ENCODE measurements at regions of chr11 and their contacts with region 1.

Region 1: DNA sequence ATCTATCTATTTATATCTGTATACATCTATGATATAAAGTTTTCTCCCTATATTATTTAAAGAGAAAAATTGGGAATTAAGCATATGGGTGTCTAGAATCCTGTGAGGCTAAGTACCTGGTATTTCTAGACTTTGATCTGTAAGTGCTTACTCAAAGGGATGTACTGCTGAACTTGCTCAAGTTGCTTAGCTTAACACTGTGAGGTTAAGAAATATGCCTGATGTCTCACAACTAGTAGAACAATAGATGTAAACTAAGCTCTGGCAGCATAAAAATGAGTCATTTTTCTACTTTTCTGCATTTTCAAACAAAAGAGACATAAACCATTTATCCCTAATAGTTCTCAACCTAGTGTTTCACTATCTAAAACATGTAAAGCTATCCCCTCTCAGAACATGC is 744.4 kb upstream of the ANO3 start:
- DNase-seq: peak; percentile 0
- H3K4me3 Mint-ChIP-seq: no peak overlapping the region
- H3K27ac Mint-ChIP-seq: no peak overlapping the region
- H3K4me1 Mint-ChIP-seq: no peaks in the 10 kb centered on the region
- H3K27me3 Mint-ChIP-seq: no peaks in the 10 kb centered on the region
- CTCF ChIP-seq: no peak

Region 2: GRCh38 chr11:25119416-25119815 is 468.1 kb before region 1 on chr11:
- CTCF ChIA-PET with region 1: no interaction called
- POLR2A ChIA-PET with region 1: no interaction called
- intact Hi-C with region 1: loop called (anchors 10 kb)
- DNase-seq: no peak
- H3K4me3 Mint-ChIP-seq: no peak overlapping the region
- H3K27ac Mint-ChIP-seq: no peak overlapping the region
- H3K4me1 Mint-ChIP-seq: no peaks in the 10 kb centered on the region
- H3K27me3 Mint-ChIP-seq: no peaks in the 10 kb centered on the region
- CTCF ChIP-seq: no peak

Measured in MCF 10A (cell line).